ENCODE measurements at regions of chr4 and their contacts with region 1.

Region 1: DNA sequence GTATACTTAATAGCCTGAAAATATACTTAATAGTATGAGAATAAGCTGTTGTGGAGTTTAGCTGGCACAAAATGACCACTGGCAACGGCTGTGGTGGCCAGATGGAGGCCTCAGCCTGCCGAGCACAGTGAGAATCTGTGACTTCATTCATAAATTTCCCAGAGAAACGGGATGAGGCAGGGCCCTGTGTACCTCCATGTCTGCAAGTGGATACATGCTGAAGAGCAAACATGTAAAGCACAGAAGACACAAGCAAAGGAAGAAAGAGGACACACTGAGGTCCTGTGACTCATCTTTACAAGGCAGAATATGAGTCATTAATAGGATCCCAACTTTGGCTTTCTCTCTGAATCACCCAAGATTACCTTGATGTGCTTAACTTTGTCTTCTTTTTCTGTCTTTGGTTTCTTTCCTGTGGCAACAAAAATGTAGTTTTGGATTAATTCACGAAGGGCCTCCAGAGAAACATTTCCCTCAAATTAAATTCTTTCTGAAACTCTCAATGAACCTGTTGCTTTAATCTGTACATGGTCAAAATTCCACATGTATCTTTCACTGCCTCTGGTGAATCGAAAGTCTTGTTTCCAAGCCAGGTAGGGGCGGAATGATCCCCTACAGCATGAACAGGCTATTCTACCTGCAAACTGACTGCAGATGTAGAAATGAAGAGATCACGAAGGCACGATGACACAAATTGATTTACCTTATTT is 56.4 kb downstream of the IRF2 start:
- DNase-seq: peak; percentile 89
- ATAC-seq: peak; percentile 99
- H3K4me3 ChIP-seq: no peak overlapping the region
- H3K27ac ChIP-seq: peak overlapping the region; percentile 87
- H3K4me1 ChIP-seq: peaks cover 24% of the 10 kb centered on the region
- H3K27me3 ChIP-seq: no peaks in the 10 kb centered on the region
- CTCF ChIP-seq: peak; percentile 27; the same call in 1 of the 2 replicates

Region 2: DNA sequence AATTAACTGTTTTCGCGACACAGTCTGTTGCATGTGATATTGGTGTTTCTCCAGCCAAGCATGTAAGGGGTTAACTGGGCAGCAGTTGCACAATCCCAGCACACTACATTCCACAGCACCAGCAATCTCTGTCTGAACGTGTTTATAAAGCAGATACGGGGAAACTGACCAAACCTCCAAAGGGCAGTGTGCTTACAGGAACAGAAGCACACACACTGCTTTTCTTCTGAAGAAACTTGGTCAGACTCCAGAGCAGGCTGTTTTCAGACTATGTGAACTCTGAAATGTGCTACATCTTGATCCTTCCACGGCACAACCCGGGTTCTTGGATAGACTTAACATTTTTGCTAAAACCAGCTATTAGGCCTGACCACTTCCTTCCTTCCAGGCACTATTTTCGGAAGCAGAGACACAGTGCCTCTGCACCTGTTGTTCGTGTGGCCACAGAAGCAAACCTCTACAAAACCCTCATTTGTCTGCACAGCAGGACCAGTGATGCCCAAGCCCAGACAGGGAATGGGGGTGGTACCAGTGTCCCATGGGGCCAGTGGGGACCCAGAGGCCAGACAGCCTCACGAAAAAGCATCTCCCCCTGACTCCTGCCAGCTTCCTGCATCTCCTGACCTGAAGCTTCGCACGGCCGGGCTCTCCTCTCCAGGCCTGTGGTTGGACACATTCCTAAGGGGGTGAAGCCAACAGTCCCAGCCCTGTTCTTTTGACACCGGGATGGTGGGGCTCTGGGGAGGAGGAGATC is 33.7 kb before region 1 on chr4:
- CTCF ChIA-PET with region 1: no interaction called
- POLR2A ChIA-PET with region 1: no interaction called
- intact Hi-C with region 1: loop called (anchors 1 kb)
- DNase-seq: peak; percentile 43
- ATAC-seq: peak; percentile 52
- H3K4me3 ChIP-seq: peak overlapping the region; percentile 64
- H3K27ac ChIP-seq: peak overlapping the region; percentile 94
- H3K4me1 ChIP-seq: peaks cover 26% of the 10 kb centered on the region
- H3K27me3 ChIP-seq: no peaks in the 10 kb centered on the region
- CTCF ChIP-seq: no peak

Region 3: GRCh38 chr4:184453365-184454160 is 35.6 kb after region 1 on chr4:
- CTCF ChIA-PET with region 1: no interaction called
- POLR2A ChIA-PET with region 1: no interaction called
- intact Hi-C with region 1: loop called (anchors 5 kb)
- DNase-seq: peak; percentile 42
- ATAC-seq: peak; percentile 89
- H3K4me3 ChIP-seq: no peak overlapping the region
- H3K27ac ChIP-seq: no peak overlapping the region
- H3K4me1 ChIP-seq: peaks cover 27% of the 10 kb centered on the region
- H3K27me3 ChIP-seq: no peaks in the 10 kb centered on the region
- CTCF ChIP-seq: no peak

Region 4: DNA sequence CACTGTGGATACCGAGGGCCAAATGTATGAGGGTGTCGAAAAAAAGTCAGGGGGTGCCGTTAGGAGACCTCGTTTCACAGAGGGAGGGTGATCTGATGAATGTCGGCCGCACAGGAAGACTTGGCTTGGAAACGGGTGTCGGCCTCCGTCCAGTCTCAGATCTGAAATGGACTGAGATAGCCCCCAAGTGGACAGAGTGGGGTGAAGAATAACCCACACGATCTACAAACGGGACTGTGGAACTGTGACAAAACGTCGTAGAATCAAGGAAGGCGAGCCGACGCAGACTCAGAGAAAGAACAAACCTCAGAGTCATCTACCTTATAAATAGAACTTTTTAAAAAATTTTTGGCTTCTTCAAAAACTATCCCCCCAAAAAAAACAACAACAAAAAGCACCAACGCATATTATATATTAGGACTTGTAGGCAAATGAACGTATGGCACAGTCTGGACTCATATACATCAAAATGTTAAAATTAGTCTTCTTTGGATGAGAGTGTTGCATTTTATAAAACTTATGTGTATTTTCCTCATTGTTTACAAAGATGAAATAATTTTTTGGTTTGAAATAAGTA is 120.2 kb after region 1 on chr4:
- CTCF ChIA-PET with region 1: no interaction called
- POLR2A ChIA-PET with region 1: no interaction called
- intact Hi-C with region 1: loop called (anchors 1 kb)
- DNase-seq: peak; percentile 80
- ATAC-seq: peak; percentile 79
- H3K4me3 ChIP-seq: peak overlapping the region; percentile 85
- H3K27ac ChIP-seq: peak overlapping the region; percentile 84
- H3K4me1 ChIP-seq: peaks cover 4% of the 10 kb centered on the region; the same call in 1 of the 2 replicates
- H3K27me3 ChIP-seq: no peaks in the 10 kb centered on the region
- CTCF ChIP-seq: peak; percentile 68